Activated B cell treated with CpG ODN at 0.5 μM for 24 hours (primary cell): ENCODE measurements at regions of chr20 and their contacts with region 1.

Region 1: GRCh38 chr20:35994994-35995453 is 26.6 kb downstream of the CNBD2 start:
- DNase-seq: peak; percentile 72
- ATAC-seq: peak; percentile 85
- H3K4me3 Mint-ChIP-seq: no peak overlapping the region
- H3K27ac Mint-ChIP-seq: no peak overlapping the region
- H3K4me1 Mint-ChIP-seq: peaks cover 5% of the 10 kb centered on the region
- H3K27me3 Mint-ChIP-seq: peaks cover 7% of the 10 kb centered on the region
- CTCF ChIP-seq: peak; percentile 25

Region 2: GRCh38 chr20:36008461-36009035 is 13.5 kb after region 1 on chr20:
- CTCF ChIA-PET with region 1: interaction called, 11 read pairs
- POLR2A ChIA-PET with region 1: interaction called, 4 read pairs
- intact Hi-C with region 1: no loop called
- DNase-seq: no peak
- ATAC-seq: no peak
- H3K4me3 Mint-ChIP-seq: no peak overlapping the region
- H3K27ac Mint-ChIP-seq: no peak overlapping the region
- H3K4me1 Mint-ChIP-seq: no peaks in the 10 kb centered on the region
- H3K27me3 Mint-ChIP-seq: peaks cover 15% of the 10 kb centered on the region
- CTCF ChIP-seq: no peak

Region 3: GRCh38 chr20:36132802-36133211 is 137.8 kb after region 1 on chr20:
- CTCF ChIA-PET with region 1: interaction called, 488 read pairs
- POLR2A ChIA-PET with region 1: interaction called, 14 read pairs
- intact Hi-C with region 1: loop called (anchors 1 kb)
- DNase-seq: no peak
- ATAC-seq: peak; percentile 95
- H3K4me3 Mint-ChIP-seq: no peak overlapping the region
- H3K27ac Mint-ChIP-seq: no peak overlapping the region
- H3K4me1 Mint-ChIP-seq: peaks cover 14% of the 10 kb centered on the region
- H3K27me3 Mint-ChIP-seq: no peaks in the 10 kb centered on the region
- CTCF ChIP-seq: no peak

Region 4: DNA sequence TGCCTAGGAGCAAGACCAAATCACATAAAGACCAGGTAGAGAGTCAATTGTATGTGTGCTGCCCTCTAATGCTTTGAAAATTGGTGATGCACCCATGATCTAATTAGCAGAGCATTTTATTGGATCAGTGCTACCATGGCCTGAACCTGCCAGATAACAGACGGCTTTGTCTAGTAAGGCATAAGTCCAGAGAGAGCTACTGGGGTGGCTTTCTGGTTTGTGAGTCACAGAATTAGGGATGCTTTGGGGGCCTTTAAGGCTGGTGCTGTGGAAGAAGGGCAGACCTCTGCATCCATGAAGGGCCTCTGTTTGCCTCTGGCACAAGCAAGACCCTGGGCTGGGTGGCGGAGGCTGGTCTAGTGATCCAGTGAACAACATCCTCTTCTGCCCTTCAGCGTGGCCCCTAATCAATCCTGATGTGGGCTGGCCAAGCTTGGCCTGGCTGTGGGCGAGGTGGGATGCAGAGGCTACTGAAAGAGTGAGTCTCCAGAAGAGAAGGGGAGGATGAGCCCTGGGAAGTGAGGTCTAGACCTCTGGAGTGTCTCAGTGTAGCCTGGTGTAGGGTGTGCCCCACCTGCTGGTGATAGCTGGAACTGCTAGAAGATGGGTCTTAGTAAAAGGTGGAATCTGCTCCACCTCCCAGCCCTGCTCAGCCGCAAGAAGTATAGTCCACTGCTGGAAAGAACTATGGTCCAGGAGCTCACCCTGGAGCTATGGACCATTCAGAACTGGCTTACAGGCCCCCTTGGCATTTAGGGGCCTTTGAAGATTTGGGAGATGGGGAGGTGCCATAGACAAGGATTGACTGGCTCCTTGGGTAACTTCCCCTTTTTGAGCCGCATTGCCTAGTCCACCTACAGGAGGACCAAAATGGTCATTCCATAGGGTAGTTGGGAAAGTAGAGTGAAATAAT is 204.6 kb after region 1 on chr20:
- CTCF ChIA-PET with region 1: interaction called, 18 read pairs
- POLR2A ChIA-PET with region 1: no interaction called
- intact Hi-C with region 1: loop called (anchors 1 kb)
- DNase-seq: peak; percentile 58
- ATAC-seq: peak; percentile 89
- H3K4me3 Mint-ChIP-seq: no peak overlapping the region
- H3K27ac Mint-ChIP-seq: no peak overlapping the region
- H3K4me1 Mint-ChIP-seq: peaks cover 8% of the 10 kb centered on the region
- H3K27me3 Mint-ChIP-seq: peaks cover 3% of the 10 kb centered on the region
- CTCF ChIP-seq: no peak

Region 5: GRCh38 chr20:36506253-36506652 is 511.2 kb after region 1 on chr20:
- CTCF ChIA-PET with region 1: no interaction called
- POLR2A ChIA-PET with region 1: no interaction called
- intact Hi-C with region 1: no loop called
- DNase-seq: no peak
- ATAC-seq: peak; percentile 56
- H3K4me3 Mint-ChIP-seq: no peak overlapping the region
- H3K27ac Mint-ChIP-seq: no peak overlapping the region
- H3K4me1 Mint-ChIP-seq: peaks cover 3% of the 10 kb centered on the region
- H3K27me3 Mint-ChIP-seq: no peaks in the 10 kb centered on the region
- CTCF ChIP-seq: no peak

Region 6: GRCh38 chr20:36745927-36746659 is 751.1 kb after region 1 on chr20 and contains the start of gene NDRG3:
- CTCF ChIA-PET with region 1: no interaction called
- POLR2A ChIA-PET with region 1: no interaction called
- intact Hi-C with region 1: no loop called
- DNase-seq: peak; percentile 84
- ATAC-seq: peak; percentile 98
- H3K4me3 Mint-ChIP-seq: peak within 1 kb of the TSS; percentile 87
- H3K27ac Mint-ChIP-seq: peak within 1 kb of the TSS; percentile 88
- H3K4me1 Mint-ChIP-seq: peaks cover 16% of the 10 kb centered on the region
- H3K27me3 Mint-ChIP-seq: no peaks in the 10 kb centered on the region
- CTCF ChIP-seq: no peak
- total RNA-seq, gene NDRG3: 20.8 and 21.4 TPM in 2 replicates

Region 7: DNA sequence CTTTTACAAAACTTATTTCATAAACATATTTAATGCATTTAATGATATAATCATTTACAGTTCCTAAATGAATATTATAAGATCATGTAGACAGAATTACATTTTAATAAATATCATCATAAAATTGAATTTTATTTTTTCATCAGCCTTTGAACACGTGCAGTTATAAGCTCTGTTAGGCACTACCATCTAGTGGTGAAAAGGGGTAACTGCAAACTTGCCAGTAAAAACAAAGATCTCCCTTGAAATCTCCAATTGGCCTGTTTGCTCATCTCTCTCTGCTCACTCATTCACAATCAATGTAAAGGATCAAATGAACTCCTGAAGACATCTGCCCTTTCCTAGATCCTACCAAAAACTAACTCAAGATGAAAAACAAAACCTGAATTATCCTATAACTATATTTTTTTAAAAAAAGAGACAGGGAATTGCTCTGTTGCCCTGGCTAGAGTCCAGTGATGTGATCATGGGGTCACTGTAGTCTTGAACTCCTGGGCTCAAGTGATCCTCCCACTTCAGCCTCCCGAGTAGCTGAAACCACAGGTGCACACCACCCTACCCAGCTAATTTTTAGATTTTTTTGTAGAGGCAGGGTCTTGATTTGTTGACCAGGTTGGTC is 924.8 kb after region 1 on chr20:
- CTCF ChIA-PET with region 1: no interaction called
- POLR2A ChIA-PET with region 1: no interaction called
- intact Hi-C with region 1: loop called (anchors 10 kb)
- DNase-seq: no peak
- ATAC-seq: peak; percentile 71
- H3K4me3 Mint-ChIP-seq: no peak overlapping the region
- H3K27ac Mint-ChIP-seq: no peak overlapping the region
- H3K4me1 Mint-ChIP-seq: no peaks in the 10 kb centered on the region
- H3K27me3 Mint-ChIP-seq: no peaks in the 10 kb centered on the region
- CTCF ChIP-seq: peak; percentile 91